WTC11 (cell line): ENCODE measurements at regions of chr19 and their contacts with region 1.

Region 1: DNA sequence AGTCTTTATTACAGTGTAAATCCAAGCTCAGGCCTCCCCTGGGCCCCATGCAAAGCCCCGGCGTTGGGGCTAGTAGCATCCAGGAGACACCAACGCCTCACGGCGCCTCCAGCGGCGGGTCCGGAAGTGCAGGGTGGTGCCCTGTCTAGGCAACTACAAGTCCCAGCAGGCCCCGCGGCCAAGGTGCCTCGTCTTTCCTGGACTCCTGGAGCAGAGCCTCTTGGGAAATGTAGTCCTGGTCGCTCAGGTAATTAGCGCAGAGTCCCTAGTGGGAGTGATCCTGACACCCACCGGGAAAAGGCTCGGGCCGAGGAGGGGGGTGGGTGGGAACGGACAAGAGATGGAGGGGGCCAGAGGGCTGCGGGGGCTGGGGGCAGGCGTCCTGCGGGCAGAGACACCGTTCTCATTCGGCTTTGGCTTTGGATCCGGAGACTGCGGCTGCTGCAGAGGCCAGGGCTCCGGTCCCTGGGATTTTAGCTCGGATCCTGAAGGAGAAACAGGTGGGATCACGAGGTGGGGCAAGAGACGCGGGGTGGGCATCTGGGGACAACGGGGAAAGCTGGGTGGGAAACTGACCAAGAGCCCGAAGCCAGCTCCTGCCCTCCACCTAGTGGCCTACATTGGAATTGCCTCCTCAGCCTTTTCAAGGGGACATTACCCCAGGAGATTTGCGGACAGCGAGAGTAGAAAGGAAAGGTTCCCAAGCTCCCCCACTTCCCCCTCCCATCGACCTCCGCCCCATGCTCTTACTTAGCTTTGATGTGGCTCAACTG is 11.4 kb downstream of the RTN2 start:
- DNase-seq: peak; percentile 100
- ATAC-seq: peak; percentile 96
- H3K4me3 Mint-ChIP-seq: peak overlapping the region; percentile 81
- H3K27ac Mint-ChIP-seq: peak overlapping the region; percentile 61; the same call in 1 of the 2 replicates
- H3K4me1 Mint-ChIP-seq: peaks cover 4% of the 10 kb centered on the region
- H3K27me3 Mint-ChIP-seq: peaks cover 5% of the 10 kb centered on the region; the same call in 1 of the 2 replicates
- CTCF ChIP-seq: peak; percentile 90

Region 2: DNA sequence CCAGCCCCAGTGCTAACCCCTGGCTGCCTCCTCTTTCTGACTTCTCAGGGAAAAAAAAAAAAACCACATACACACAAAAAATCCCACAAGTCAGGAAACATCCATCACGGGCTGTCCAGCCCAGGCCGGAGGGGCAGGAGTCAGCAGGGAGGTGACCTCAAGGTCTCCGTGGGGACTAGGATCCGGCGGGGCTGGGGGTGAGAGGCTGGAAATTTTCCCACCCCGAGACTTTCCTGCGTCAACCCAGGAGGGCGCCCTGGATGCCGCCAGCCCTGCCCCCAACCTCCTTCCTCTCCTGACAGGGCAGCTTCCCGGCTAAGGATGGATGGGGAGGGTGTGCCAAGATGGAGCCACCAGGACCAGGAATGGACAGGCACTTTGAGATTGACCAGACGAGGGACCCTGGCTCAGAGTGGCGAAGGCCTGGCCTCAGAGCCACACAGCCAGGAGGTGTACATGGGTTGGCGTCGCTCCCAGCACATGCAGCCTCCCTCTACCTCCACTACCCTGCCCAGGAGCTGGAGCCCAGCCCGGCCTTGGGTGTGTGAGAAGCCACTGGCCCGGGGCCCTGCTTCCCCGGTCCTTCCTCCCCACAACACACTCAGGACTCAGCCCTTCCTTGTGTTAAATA is 273.6 kb before region 1 on chr19:
- CTCF ChIA-PET with region 1: no interaction called
- POLR2A ChIA-PET with region 1: no interaction called
- DNase-seq: no peak
- ATAC-seq: peak; percentile 18; the same call in 1 of the 2 replicates
- H3K4me3 Mint-ChIP-seq: no peak overlapping the region
- H3K27ac Mint-ChIP-seq: no peak overlapping the region
- H3K4me1 Mint-ChIP-seq: peaks cover 15% of the 10 kb centered on the region
- H3K27me3 Mint-ChIP-seq: peaks cover 36% of the 10 kb centered on the region
- CTCF ChIP-seq: no peak

Region 3: GRCh38 chr19:45376045-45376724 is 109.3 kb before region 1 on chr19:
- CTCF ChIA-PET with region 1: interaction called, 14 read pairs
- POLR2A ChIA-PET with region 1: no interaction called
- DNase-seq: peak; percentile 68
- ATAC-seq: peak; percentile 91
- H3K4me3 Mint-ChIP-seq: no peak overlapping the region
- H3K27ac Mint-ChIP-seq: peak overlapping the region; percentile 92
- H3K4me1 Mint-ChIP-seq: peaks cover 19% of the 10 kb centered on the region
- H3K27me3 Mint-ChIP-seq: no peaks in the 10 kb centered on the region
- CTCF ChIP-seq: no peak

Region 4: DNA sequence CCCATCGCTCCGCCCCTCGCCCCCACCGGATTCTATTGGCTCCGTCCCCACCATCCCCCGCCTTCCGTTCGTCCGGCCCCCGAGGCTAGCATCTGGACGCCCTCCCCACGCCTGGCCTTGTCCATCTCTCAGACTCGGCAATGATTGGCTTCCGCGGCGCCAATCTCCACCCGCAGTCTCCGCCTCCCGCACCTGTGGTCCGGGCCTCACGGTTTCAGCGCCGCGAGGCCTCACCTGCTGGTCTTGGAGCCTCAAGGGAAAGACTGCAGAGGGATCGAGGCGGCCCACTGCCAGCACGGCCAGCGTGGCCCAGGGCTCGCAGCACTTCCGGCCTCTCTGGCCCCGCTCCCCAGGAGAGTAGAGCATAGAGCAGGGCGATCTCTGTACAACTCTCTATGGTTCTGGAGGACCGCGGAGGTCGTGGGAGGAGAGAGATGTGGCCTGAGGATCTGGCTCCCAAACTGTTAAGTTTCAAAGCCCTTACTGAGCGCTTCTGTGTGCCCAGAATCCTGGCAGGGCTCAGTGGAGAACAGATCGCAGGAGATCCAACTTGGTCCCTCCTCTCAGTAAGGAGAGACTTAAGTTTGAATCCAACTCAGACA is 61.8 kb before region 1 on chr19 and contains the start of gene ERCC1:
- CTCF ChIA-PET with region 1: interaction called, 80 read pairs
- POLR2A ChIA-PET with region 1: interaction called, 5 read pairs
- DNase-seq: peak; percentile 100
- ATAC-seq: peak; percentile 90
- H3K4me3 Mint-ChIP-seq: peak within 1 kb of the TSS; percentile 93
- H3K27ac Mint-ChIP-seq: peak within 1 kb of the TSS; percentile 99
- H3K4me1 Mint-ChIP-seq: peaks cover 21% of the 10 kb centered on the region
- H3K27me3 Mint-ChIP-seq: no peaks in the 10 kb centered on the region
- CTCF ChIP-seq: no peak
- total RNA-seq, gene ERCC1: 43.7 to 60.6 TPM (median 60.1 TPM) in 3 replicates

Region 5: DNA sequence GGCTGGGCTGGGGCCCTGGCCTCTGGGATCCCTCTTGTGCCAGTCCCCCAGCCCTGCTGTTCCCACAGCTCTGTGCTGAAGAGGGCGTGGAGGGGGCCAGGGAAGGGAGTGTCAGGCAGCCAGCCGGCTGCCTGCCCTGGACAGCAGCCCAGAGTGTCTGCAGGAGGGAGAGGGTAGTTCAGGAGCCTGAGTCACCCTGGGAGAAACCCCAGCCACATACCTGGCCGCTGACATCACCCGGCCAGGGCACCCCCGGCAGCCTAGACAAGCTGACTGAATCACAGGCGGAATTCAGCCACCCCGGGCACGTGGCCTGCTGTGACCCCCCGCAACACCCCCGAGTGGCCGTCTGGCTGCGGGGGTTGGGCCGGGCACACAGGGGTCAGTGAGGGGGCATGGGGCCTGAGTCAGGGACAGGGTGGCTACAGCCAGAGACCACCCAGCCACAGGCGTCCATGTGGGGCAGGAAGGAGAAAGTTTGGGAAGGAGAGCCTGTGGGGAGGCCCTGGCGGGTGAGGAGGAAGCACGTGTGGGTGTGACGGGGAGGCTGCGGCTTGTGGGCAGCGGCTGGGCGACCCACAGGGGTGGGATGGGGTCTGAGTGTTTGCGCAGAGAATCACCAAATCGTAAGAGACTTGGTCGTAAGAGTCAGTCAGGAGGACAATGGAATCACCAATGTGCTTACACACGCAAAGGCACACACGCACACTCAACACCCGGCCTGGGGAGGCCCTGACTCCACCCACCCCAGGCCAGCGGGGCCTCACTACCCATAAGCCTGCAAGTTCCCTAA is 29.6 kb before region 1 on chr19:
- CTCF ChIA-PET with region 1: interaction called, 15 read pairs
- POLR2A ChIA-PET with region 1: no interaction called
- DNase-seq: peak; percentile 78
- ATAC-seq: peak; percentile 93
- H3K4me3 Mint-ChIP-seq: no peak overlapping the region
- H3K27ac Mint-ChIP-seq: peak overlapping the region; percentile 78
- H3K4me1 Mint-ChIP-seq: peaks cover 14% of the 10 kb centered on the region
- H3K27me3 Mint-ChIP-seq: peaks cover 37% of the 10 kb centered on the region
- CTCF ChIP-seq: no peak

Region 6: GRCh38 chr19:45506246-45506990 is 20.9 kb after region 1 on chr19:
- CTCF ChIA-PET with region 1: interaction called, 145 read pairs
- POLR2A ChIA-PET with region 1: interaction called, 4 read pairs
- DNase-seq: peak; percentile 98
- ATAC-seq: peak; percentile 70
- H3K4me3 Mint-ChIP-seq: peak overlapping the region; percentile 91
- H3K27ac Mint-ChIP-seq: peak overlapping the region; percentile 93
- H3K4me1 Mint-ChIP-seq: peaks cover 38% of the 10 kb centered on the region
- H3K27me3 Mint-ChIP-seq: no peaks in the 10 kb centered on the region; the same call in 1 of the 2 replicates
- CTCF ChIP-seq: no peak

Region 7: DNA sequence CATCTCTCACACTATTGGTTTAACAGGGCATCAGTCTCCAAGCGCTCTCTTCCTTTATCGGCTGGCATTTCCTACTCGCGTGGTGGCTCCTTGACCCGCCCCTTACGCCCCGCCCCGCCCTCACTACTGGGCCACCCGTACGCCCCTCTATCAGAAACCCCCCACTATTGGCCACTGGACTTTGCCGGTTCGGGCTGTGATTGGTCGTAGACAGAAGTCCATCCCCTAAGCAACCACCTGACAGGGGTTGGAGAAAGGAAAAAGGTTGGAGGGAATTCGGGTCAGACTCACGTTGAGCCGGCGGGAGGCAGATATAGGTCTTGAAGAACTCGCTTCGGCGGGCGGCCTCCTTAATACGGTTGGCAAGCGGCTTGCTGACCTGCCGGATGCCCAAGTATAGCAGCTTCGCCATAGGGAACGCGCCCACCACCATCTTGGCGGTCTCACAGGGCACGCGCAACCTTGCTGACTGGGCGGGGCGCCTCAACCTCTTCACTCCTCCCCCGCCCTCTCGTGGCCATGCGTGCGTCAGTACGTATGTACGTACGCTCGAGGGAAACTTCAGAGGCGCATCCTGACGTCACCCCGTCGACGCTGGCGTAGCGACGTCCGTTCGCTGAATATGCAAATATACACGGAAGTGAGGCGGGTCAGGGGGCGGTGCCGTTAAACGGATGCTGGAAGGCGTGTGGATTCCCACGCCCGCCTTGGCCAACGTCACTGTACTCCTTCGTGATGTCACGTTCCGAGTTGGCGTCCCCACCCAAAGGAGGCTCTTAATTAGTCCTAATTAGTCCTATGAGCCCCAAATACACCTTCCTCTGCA is 99.1 kb after region 1 on chr19 and contains the start of gene OPA3:
- CTCF ChIA-PET with region 1: interaction called, 17 read pairs
- POLR2A ChIA-PET with region 1: no interaction called
- DNase-seq: peak; percentile 98
- ATAC-seq: peak; percentile 96
- H3K4me3 Mint-ChIP-seq: peak within 1 kb of the TSS; percentile 91
- H3K27ac Mint-ChIP-seq: peak within 1 kb of the TSS; percentile 97
- H3K4me1 Mint-ChIP-seq: peaks cover 17% of the 10 kb centered on the region
- H3K27me3 Mint-ChIP-seq: peaks cover 11% of the 10 kb centered on the region
- CTCF ChIP-seq: no peak
- total RNA-seq, gene OPA3: 10.1 to 16.1 TPM (median 14.9 TPM) in 3 replicates

Region 8: DNA sequence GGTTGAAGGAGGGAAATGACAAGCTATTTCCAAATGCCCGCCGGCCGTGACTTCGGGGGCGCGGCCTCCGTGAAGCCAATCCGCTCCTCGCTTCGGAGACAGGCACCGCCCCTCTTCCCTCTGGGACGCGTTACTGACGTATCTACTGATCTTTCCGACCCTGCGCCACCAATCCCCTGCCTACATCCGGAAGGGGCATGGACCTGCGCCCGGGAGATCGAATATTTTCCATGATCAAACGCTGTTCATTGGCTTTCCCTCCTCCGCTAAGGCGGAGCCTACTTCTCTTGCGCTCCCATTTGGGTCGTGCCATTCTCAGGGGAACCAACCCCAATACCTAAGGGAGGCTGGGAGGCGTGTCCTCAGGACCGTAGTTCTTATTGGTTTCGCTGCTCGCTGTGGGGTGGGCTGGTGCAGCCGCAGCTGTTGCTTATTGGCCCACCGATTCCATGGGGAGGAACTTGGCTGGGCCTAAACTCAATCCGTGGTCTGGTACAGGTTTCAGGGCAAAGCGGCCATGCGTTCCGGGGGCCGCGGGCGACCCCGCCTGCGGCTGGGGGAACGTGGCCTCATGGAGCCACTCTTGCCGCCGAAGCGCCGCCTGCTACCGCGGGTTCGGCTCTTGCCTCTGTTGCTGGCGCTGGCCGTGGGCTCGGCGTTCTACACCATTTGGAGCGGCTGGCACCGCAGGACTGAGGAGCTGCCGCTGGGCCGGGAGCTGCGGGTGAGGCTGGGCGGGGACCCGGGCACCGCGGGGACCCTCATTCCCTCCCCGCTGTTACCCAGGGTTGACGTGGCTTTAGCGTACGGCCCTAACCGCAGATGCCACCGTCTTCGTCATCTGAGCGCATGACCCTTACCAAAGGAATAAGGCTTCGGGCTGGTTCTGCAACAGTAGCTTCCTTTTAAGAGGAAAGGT is 207.0 kb after region 1 on chr19 and contains the start of gene QPCTL:
- CTCF ChIA-PET with region 1: interaction called, 12 read pairs
- POLR2A ChIA-PET with region 1: no interaction called
- DNase-seq: peak; percentile 97
- ATAC-seq: peak; percentile 95
- H3K4me3 Mint-ChIP-seq: peak within 1 kb of the TSS; percentile 96
- H3K27ac Mint-ChIP-seq: peak within 1 kb of the TSS; percentile 100
- H3K4me1 Mint-ChIP-seq: peaks cover 6% of the 10 kb centered on the region; the same call in 1 of the 2 replicates
- H3K27me3 Mint-ChIP-seq: peaks cover 3% of the 10 kb centered on the region; the same call in 1 of the 2 replicates
- CTCF ChIP-seq: no peak
- total RNA-seq, gene QPCTL: 23.8 to 33.3 TPM (median 27.5 TPM) in 3 replicates